ENCODE measurements at regions of chr11 and their contacts with region 1.

Region 1: GRCh38 chr11:112795142-112795815 is 165.9 kb upstream of the NCAM1 start:
- DNase-seq: peak; percentile 60 to 73 (median 71)
- ATAC-seq: peak; percentile 95
- H3K4me3 ChIP-seq: no peak overlapping the region
- H3K27ac ChIP-seq: no peak overlapping the region
- H3K4me1 ChIP-seq: no peaks in the 10 kb centered on the region
- H3K27me3 ChIP-seq: peaks cover 0 to 23% of the 10 kb centered on the region in 2 experiments; a peak in 2 of 5 replicates
- CTCF ChIP-seq: peak; percentile 70 to 79 (median 70)
- EP300 ChIP-seq: no peak
- POLR2A ChIP-seq: no peak
- RAD21 ChIP-seq: peak; percentile 37 to 56; a peak in 2 of 4 replicates

Region 2: DNA sequence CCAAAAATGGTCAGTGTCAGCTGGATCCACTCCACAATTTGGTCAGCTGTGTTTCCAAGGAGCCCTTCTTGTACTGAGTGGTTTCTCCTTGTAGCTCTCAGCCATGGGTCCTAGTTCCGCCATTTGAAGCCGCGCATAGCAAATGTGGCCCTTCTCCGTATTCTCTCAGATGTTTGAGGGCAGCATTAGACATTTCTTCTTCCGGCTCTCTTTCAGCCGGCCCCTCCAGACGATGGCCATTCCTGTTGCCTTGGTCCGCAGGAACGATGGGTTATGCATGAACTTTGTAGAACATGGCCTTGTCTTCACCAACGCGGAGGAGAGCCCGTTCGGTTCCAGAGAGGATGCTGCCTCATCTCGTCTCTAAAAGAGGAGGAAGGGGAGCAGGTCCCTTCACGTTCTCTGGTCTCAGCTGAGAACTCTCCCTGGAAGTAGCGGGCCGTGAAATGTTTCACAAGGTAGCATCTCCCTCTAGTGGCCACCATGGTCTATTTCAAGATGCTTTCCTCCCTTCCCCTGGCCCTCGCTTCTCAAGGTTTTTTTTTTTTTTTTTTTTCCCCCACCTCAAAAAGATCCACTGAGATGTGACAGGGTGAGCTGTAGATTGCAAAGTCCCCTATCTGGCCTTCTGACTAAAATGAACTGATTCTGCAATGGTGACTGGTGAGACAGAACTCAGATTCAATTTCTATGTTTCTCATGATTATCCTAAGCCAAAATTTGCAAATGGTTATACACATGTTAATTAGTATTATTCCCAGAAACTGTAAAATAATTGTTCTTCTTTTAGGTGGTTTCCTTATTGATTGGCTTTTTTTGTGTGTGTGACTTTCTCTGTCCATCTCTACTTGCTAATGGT is 514.8 kb before region 1 on chr11:
- CTCF ChIA-PET with region 1: interaction called, 4 read pairs
- POLR2A ChIA-PET with region 1: no interaction called
- in situ Hi-C with region 1: no loop called
- intact Hi-C with region 1: loop called (anchors 10 kb)
- DNase-seq: peak; percentile 76 to 87 (median 78)
- ATAC-seq: peak; percentile 94
- H3K4me3 ChIP-seq: peak overlapping the region; percentile 23; the same call in 1 of the 2 replicates
- H3K27ac ChIP-seq: no peak overlapping the region
- H3K4me1 ChIP-seq: peaks cover 18 to 19% of the 10 kb centered on the region in 2 experiments
- H3K27me3 ChIP-seq: peaks cover 0 to 7% of the 10 kb centered on the region in 2 experiments; a peak in 1 of 5 replicates
- CTCF ChIP-seq: peak; percentile 78 to 89 (median 84)
- EP300 ChIP-seq: no peak
- POLR2A ChIP-seq: no peak
- RAD21 ChIP-seq: peak; percentile 72 to 81

Region 3: GRCh38 chr11:112425121-112425520 is 370.2 kb before region 1 on chr11:
- CTCF ChIA-PET with region 1: no interaction called
- POLR2A ChIA-PET with region 1: no interaction called
- in situ Hi-C with region 1: no loop called
- intact Hi-C with region 1: no loop called
- DNase-seq: no peak
- ATAC-seq: no peak
- H3K4me3 ChIP-seq: no peak overlapping the region
- H3K27ac ChIP-seq: no peak overlapping the region
- H3K4me1 ChIP-seq: no peaks in the 10 kb centered on the region
- H3K27me3 ChIP-seq: no peaks in the 10 kb centered on the region; a peak in 1 of 5 replicates
- CTCF ChIP-seq: no peak
- EP300 ChIP-seq: no peak
- POLR2A ChIP-seq: no peak
- RAD21 ChIP-seq: no peak

Region 4: DNA sequence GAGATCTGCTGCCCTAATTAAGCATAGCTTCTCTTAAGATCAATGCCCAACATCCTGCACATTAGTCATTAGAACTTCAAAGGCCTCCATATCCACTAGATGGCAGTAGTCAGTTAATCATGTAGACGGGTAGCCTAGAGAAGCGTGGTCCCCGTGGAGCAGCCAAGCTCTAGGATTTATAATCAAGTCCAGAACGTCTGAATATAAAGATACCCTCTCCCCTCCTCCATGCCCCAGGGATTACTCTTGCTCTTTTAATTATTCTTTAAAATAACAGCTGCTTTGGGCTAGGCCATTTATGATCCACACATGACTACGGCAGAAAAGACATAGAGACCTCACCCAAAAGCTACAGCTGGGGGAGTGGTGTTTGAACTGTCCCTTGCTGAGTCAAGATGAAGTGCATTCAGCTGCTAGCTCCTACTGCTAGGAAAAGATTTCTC is 207.0 kb before region 1 on chr11:
- CTCF ChIA-PET with region 1: interaction called, 4 read pairs
- POLR2A ChIA-PET with region 1: interaction called, 3 read pairs
- in situ Hi-C with region 1: no loop called
- intact Hi-C with region 1: loop called (anchors 2 kb)
- DNase-seq: peak; percentile 55 to 72 (median 58)
- ATAC-seq: peak; percentile 95
- H3K4me3 ChIP-seq: no peak overlapping the region
- H3K27ac ChIP-seq: no peak overlapping the region
- H3K4me1 ChIP-seq: no peaks in the 10 kb centered on the region
- H3K27me3 ChIP-seq: no peaks in the 10 kb centered on the region
- CTCF ChIP-seq: peak; percentile 55 to 72 (median 68)
- EP300 ChIP-seq: no peak
- POLR2A ChIP-seq: no peak
- RAD21 ChIP-seq: peak; percentile 63 to 74

Region 5: GRCh38 chr11:112983887-112984286 is 188.6 kb after region 1 on chr11:
- CTCF ChIA-PET with region 1: no interaction called
- POLR2A ChIA-PET with region 1: no interaction called
- in situ Hi-C with region 1: no loop called
- intact Hi-C with region 1: no loop called
- DNase-seq: no peak
- ATAC-seq: no peak
- H3K4me3 ChIP-seq: no peak overlapping the region
- H3K27ac ChIP-seq: no peak overlapping the region
- H3K4me1 ChIP-seq: no peaks in the 10 kb centered on the region
- H3K27me3 ChIP-seq: no peaks in the 10 kb centered on the region
- CTCF ChIP-seq: no peak
- EP300 ChIP-seq: no peak
- POLR2A ChIP-seq: no peak
- RAD21 ChIP-seq: no peak

Region 6: GRCh38 chr11:113113801-113114706 is 318.8 kb after region 1 on chr11:
- CTCF ChIA-PET with region 1: no interaction called
- POLR2A ChIA-PET with region 1: no interaction called
- in situ Hi-C with region 1: no loop called
- intact Hi-C with region 1: loop called (anchors 5 kb)
- DNase-seq: peak in 2 of 4 experiments; percentile 9 to 21
- ATAC-seq: peak; percentile 89
- H3K4me3 ChIP-seq: no peak overlapping the region
- H3K27ac ChIP-seq: no peak overlapping the region
- H3K4me1 ChIP-seq: no peaks in the 10 kb centered on the region
- H3K27me3 ChIP-seq: no peaks in the 10 kb centered on the region
- CTCF ChIP-seq: peak in 2 of 3 experiments; percentile 48 to 58; a peak in 4 of 6 replicates
- EP300 ChIP-seq: no peak
- POLR2A ChIP-seq: no peak
- RAD21 ChIP-seq: peak; percentile 41 to 54

Region 7: DNA sequence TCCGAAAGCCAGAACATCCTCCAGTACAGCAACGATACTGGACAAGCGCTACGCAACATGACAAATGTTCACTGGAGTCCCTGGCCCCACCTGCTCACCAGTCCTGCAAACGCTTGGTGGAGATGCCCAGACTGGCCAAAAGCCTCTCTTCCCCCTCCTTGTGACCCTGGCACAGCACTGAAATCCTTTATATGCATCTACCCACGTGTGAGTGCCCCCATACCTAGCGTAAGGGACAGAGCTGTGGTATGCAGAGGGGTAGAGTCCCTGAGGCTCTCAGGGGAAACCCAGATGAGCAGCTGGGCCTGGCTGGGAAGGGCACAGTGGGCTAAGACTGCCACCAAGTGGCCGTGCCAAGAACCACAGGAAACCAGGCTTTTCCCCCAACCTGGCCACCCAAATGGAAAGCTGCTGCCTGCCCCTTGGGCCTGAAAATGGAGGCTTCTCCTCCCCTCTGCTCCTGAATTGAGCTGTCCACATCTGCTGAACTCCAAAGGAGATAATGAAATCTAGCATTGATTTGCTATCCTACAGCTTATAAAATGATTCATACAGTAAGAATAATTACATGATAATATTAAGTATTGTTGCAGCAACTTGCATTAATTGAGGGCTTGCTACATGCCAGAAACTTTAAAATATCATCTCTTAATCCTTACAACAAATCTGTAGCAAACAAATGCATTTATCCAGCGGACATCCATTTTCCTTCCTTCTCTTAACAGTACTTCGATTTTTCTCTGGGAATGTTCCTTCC is 494.3 kb after region 1 on chr11:
- CTCF ChIA-PET with region 1: interaction called, 3 read pairs
- POLR2A ChIA-PET with region 1: no interaction called
- in situ Hi-C with region 1: no loop called
- intact Hi-C with region 1: loop called (anchors 2 kb)
- DNase-seq: peak; percentile 58 to 71 (median 70)
- ATAC-seq: peak; percentile 97
- H3K4me3 ChIP-seq: no peak overlapping the region
- H3K27ac ChIP-seq: no peak overlapping the region
- H3K4me1 ChIP-seq: no peaks in the 10 kb centered on the region
- H3K27me3 ChIP-seq: peaks cover 2 to 46% of the 10 kb centered on the region in 2 experiments
- CTCF ChIP-seq: peak; percentile 85 to 91 (median 89)
- EP300 ChIP-seq: no peak
- POLR2A ChIP-seq: no peak
- RAD21 ChIP-seq: peak; percentile 86 to 91

Measured in K562 (cell line).